ENCODE measurements at regions of chr1 and their contacts with region 1.

Region 1: DNA sequence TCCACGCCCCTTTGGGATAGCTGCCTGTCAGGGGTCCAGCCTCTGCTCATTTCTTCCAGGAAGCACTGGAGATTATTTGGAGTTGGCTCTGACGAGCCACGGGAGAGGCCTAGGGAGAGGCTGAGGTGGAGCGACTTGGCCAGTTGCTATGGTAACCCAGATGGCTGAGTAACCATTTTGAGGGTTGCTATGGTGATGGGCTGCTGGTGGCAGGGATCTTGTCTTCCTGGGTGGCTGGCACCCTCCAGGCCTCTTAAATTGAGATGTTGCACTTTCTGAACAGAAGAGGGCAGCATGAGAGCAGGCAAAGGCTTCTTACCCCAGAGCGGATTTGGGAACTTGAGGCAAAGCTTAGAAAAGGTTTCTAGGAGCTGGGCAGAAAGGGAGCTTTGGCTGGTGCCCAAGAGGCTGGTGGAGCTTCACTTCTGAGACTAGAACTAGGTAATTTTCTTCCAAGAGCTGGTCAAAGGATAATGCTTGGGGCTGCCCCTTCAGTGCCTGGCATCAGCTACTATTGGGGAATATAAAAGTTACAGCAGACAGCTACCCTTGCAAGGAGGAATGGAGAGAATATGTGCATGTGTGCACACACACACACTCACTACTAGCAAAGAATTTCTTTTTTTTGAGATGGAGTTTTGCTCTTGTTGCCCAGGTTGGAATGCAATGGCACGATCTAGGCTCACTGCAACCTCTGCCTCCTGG is 72.5 kb downstream of the NDUFS5 start:
- DNase-seq: peak; percentile 26 to 92 (median 54)
- ATAC-seq: peak; percentile 85
- H3K4me3 ChIP-seq: no peak overlapping the region
- H3K4me3 Mint-ChIP-seq: no peak overlapping the region
- H3K27ac ChIP-seq: no peak overlapping the region
- H3K27ac Mint-ChIP-seq: no peak overlapping the region
- H3K4me1 ChIP-seq: peaks cover 7% of the 10 kb centered on the region
- H3K4me1 Mint-ChIP-seq: peaks cover 22% of the 10 kb centered on the region
- H3K27me3 ChIP-seq: no peaks in the 10 kb centered on the region
- H3K27me3 Mint-ChIP-seq: no peaks in the 10 kb centered on the region
- CTCF ChIP-seq: peak; percentile 62

Region 2: DNA sequence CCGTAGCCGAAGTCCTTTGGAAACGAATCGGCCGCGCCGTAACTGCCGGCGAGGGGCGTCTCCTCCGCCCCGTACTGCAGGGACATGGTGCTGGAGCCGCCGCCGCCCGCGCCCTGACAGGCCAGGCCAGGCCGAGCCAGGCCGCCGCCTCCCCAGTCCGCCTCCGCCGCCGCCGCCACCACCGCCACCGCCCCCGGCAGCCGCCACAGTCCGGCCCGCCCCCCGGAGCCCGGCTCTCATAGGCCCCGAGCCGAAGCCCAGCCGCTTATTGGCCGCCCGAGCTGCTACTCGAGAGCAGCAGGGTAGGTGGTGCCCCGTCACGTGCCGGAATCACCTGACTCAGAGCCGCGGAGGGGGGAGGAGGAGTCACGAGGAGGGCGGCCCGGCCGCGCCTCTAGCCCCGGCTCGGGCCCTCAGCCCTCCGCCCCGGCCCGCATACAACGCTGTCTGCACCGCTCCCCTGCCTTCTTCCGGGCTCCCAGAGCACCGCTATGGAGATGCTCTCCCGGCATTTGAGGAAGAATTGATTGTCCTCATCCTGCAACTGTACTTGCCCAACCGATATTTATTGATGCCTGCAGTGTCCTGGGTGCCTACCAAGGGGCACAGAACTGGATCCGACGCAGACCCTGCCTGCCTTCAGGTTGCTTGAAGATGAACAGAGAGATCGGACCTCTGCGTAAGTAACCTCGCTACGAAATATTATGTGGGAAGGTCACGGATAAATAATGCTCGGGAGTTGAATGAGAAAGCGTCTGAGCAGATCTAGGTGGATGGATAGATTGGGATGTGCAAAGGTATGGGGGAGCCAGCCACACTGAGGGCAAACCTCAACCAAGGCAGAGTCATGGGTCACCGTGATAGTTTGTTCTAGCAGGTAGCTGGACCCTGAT is 238.9 kb before region 1 on chr1 and contains the start of gene RRAGC:
- CTCF ChIA-PET with region 1: no interaction called
- POLR2A ChIA-PET with region 1: no interaction called
- intact Hi-C with region 1: loop called (anchors 5 to 10 kb)
- DNase-seq: peak; percentile 95 to 99 (median 98)
- ATAC-seq: peak; percentile 98
- H3K4me3 ChIP-seq: peak within 1 kb of the TSS; percentile 85
- H3K4me3 Mint-ChIP-seq: peak within 1 kb of the TSS; percentile 96
- H3K27ac ChIP-seq: peak within 1 kb of the TSS; percentile 10 to 58
- H3K27ac Mint-ChIP-seq: peak within 1 kb of the TSS; percentile 89
- H3K4me1 ChIP-seq: peaks cover 31% of the 10 kb centered on the region
- H3K4me1 Mint-ChIP-seq: peaks cover 73% of the 10 kb centered on the region
- H3K27me3 ChIP-seq: no peaks in the 10 kb centered on the region
- H3K27me3 Mint-ChIP-seq: no peaks in the 10 kb centered on the region
- CTCF ChIP-seq: no peak
- total RNA-seq, gene RRAGC: 9.2 to 11.4 TPM

Region 3: GRCh38 chr1:39183503-39184353 is 85.0 kb after region 1 on chr1:
- CTCF ChIA-PET with region 1: interaction called, 11 read pairs
- POLR2A ChIA-PET with region 1: no interaction called
- intact Hi-C with region 1: no loop called
- DNase-seq: peak; percentile 67 to 94 (median 80)
- ATAC-seq: peak; percentile 89
- H3K4me3 ChIP-seq: no peak overlapping the region
- H3K4me3 Mint-ChIP-seq: no peak overlapping the region
- H3K27ac ChIP-seq: peak overlapping the region; percentile 85 to 86
- H3K27ac Mint-ChIP-seq: peak overlapping the region; percentile 89
- H3K4me1 ChIP-seq: peaks cover 29% of the 10 kb centered on the region
- H3K4me1 Mint-ChIP-seq: peaks cover 42% of the 10 kb centered on the region
- H3K27me3 ChIP-seq: no peaks in the 10 kb centered on the region
- H3K27me3 Mint-ChIP-seq: no peaks in the 10 kb centered on the region
- CTCF ChIP-seq: peak; percentile 87

Region 4: DNA sequence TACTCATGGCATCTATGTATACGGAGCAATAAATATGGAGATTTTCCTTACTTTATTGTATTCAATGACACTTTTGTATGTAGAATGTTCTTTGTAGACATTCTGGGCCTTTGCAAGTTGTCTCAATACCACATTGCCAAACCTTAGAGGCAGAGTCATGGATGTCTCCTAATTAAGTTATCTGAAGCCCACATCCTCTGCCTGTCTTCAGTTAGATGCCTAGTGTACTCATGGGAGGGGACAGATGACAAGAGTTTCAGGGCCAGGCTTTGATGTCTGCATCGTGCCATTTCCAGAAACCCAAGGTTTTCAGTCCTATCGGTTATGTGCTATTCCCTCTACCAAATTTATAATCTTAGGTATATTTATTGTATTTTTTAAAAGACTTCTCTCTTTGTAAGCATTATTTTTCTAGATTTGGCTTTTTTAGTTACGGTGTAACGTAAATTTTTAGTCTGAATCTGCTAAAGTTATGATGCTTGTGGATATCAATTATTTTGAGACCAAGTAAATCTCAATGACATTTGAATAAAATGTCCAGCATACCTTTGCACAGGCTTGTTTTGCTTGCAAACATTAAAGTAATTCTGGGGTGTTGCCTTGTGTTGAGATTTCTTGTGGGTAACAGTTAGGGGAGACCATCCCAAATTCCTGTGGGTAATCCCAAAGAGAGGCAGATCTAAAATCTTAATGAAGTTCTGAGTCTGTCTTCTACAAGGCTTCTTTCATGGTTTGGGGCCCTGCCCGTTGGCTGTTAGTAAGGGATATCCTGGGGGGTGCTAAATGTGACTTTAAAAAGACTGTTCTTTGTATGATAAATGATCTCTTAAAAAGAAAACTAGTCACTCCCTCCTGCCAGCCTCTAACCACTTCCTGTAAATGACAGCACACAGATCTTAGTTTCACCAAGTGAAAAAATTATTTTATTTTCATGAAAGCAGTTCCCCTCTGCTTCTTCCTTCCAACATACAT is 97.8 kb after region 1 on chr1:
- CTCF ChIA-PET with region 1: interaction called, 13 read pairs
- POLR2A ChIA-PET with region 1: interaction called, 8 read pairs
- intact Hi-C with region 1: loop called (anchors 1 to 2 kb)
- DNase-seq: peak; percentile 31 to 94 (median 61)
- ATAC-seq: peak; percentile 66
- H3K4me3 ChIP-seq: peak overlapping the region; percentile 2
- H3K4me3 Mint-ChIP-seq: peak overlapping the region; percentile 77
- H3K27ac ChIP-seq: peak overlapping the region; percentile 81 to 85
- H3K27ac Mint-ChIP-seq: peak overlapping the region; percentile 93
- H3K4me1 ChIP-seq: peaks cover 68% of the 10 kb centered on the region
- H3K4me1 Mint-ChIP-seq: peaks cover 82% of the 10 kb centered on the region
- H3K27me3 ChIP-seq: no peaks in the 10 kb centered on the region
- H3K27me3 Mint-ChIP-seq: no peaks in the 10 kb centered on the region
- CTCF ChIP-seq: no peak

Region 5: GRCh38 chr1:39275836-39276507 is 177.3 kb after region 1 on chr1:
- CTCF ChIA-PET with region 1: interaction called, 3 read pairs
- POLR2A ChIA-PET with region 1: no interaction called
- intact Hi-C with region 1: loop called in 1 of 2 experiments (anchors 5 kb)
- DNase-seq: no peak
- ATAC-seq: no peak
- H3K4me3 ChIP-seq: no peak overlapping the region
- H3K4me3 Mint-ChIP-seq: no peak overlapping the region
- H3K27ac ChIP-seq: no peak overlapping the region
- H3K27ac Mint-ChIP-seq: peak overlapping the region; percentile 69
- H3K4me1 ChIP-seq: peaks cover 11% of the 10 kb centered on the region
- H3K4me1 Mint-ChIP-seq: peaks cover 68% of the 10 kb centered on the region
- H3K27me3 ChIP-seq: no peaks in the 10 kb centered on the region
- H3K27me3 Mint-ChIP-seq: no peaks in the 10 kb centered on the region
- CTCF ChIP-seq: no peak

Region 6: DNA sequence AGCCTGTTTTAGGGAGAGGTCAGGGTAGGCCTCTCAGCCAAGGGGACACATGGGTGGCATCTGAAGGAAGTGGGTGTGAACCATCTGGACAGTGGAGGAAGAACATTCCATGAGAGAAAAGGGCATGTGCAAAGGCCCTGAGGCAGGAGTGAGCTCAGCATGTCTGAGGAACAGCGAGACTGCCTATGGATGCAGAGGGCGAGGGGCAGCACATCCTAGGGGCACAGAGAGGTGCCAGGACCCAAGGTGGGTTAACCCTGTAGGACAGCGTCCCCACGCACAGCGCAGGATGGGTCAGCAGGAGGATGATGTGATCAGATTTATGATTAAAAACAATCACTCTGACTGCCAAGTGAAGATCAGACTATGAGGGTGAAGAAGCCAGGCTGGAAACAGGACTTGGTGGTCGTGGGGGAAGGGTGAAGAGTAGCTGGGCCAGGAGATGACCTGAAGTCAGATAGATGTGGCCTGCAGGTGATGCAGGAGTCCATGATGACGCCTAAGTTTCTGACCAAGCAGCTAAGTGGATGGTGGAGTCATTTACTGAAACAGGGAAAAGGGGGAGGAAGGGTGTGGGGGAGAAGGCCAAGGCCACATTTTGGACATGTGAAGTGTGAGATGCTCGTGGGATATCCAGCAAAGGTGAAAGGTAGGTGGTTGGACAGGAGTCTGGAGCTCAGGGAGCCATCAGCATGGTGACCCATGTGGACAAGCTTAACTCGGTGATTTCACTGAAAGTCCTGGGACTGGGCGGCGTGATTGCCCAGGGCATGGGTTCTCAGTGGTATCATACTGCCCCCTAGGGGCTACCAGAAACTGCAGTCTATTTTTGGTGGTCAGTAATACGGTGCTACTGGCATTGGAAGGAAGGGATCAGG is 440.1 kb after region 1 on chr1:
- CTCF ChIA-PET with region 1: no interaction called
- POLR2A ChIA-PET with region 1: no interaction called
- intact Hi-C with region 1: loop called in 1 of 2 experiments (anchors 2 kb)
- DNase-seq: peak in 11 of 14 experiments; percentile 7 to 72 (median 26)
- ATAC-seq: peak; percentile 69
- H3K4me3 ChIP-seq: no peak overlapping the region
- H3K4me3 Mint-ChIP-seq: no peak overlapping the region
- H3K27ac ChIP-seq: no peak overlapping the region
- H3K27ac Mint-ChIP-seq: no peak overlapping the region
- H3K4me1 ChIP-seq: no peaks in the 10 kb centered on the region
- H3K4me1 Mint-ChIP-seq: no peaks in the 10 kb centered on the region
- H3K27me3 ChIP-seq: no peaks in the 10 kb centered on the region
- H3K27me3 Mint-ChIP-seq: no peaks in the 10 kb centered on the region
- CTCF ChIP-seq: peak; percentile 76

Region 7: DNA sequence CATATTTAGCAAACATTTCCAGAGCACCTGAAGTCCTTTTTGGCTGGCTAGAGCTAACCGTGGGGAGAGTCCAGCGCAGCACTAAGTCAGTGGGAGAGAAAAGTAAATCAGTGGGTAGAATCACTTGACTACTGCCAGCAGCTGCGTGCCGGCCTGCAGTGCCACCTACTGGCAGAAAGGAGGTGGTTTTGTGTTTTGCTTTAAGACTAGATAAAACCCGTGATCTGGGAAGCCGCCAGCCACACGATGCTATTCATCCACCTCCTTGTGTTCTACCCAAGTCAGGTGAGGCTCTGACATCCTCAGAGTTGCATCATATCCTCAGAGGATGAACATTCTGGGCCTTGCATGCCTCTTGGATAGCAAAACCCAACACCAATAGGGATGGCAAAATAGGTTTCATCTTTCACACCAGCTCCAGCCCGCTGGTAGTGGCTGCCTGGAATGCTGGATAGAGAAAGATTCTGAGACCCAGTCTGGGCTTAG is 554.9 kb after region 1 on chr1:
- CTCF ChIA-PET with region 1: no interaction called
- POLR2A ChIA-PET with region 1: no interaction called
- intact Hi-C with region 1: loop called in 1 of 2 experiments (anchors 5 kb)
- DNase-seq: peak; percentile 59 to 85 (median 68)
- ATAC-seq: peak; percentile 88
- H3K4me3 ChIP-seq: no peak overlapping the region
- H3K4me3 Mint-ChIP-seq: no peak overlapping the region
- H3K27ac ChIP-seq: no peak overlapping the region
- H3K27ac Mint-ChIP-seq: no peak overlapping the region
- H3K4me1 ChIP-seq: peaks cover 11% of the 10 kb centered on the region
- H3K4me1 Mint-ChIP-seq: peaks cover 7% of the 10 kb centered on the region
- H3K27me3 ChIP-seq: peaks cover 3 to 7% of the 10 kb centered on the region in 2 experiments
- H3K27me3 Mint-ChIP-seq: peaks cover 13% of the 10 kb centered on the region
- CTCF ChIP-seq: peak; percentile 98